Astrocyte of the cerebellum (primary cell): ENCODE measurements at regions of chr7 and their contacts with region 1.

Region 1: DNA sequence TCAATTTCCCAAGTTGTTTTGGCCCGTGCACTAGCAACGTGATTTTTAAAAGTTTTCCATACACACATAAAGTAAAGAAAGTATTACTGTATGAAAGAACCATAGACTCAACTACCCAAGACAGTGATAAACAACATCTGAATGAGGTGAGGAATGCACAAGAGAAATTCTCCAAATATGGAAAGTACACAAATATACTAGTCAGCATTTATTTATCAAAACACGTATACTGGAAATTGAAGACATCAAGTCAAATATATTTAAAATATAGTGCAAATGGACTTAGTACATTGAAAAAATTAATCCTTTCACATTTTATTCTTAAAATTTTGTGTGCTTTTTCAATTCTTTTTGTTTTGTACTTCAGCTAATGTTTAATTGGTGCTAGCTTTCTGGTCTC is 143.6 kb downstream of the ARL4A start:
- DNase-seq: no peak
- H3K4me3 ChIP-seq: no peak overlapping the region
- CTCF ChIP-seq: no peak

Region 2: DNA sequence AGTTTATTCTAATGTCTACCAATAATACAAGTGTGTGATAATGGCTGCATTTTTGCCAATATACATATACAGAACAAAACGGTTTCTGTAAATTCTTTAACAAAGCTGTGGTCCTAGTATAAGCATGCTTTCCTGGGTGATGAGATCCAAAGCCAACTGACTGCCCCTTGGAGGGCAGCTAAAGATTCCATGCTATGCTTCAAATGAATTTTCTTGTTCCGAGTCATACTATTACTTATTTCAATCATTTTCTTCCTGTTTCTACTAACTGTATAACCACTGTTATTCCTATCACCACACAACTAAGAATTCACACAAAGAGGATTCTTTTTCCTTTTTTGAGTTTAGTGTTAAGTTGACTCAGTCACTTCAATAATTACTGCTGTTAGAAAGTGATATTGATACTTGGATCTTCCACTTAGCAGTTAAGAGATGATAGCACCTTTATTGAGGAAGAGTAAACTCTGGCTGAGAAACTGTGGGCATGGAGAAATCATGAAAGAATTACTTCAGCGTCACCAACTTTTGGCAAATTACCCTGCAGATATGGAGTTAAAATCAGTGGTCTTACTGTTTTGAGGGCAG is 53.9 kb after region 1 on chr7:
- in situ Hi-C with region 1: loop called (anchors 5 kb)
- DNase-seq: no peak
- H3K4me3 ChIP-seq: no peak overlapping the region
- CTCF ChIP-seq: no peak

Region 3: DNA sequence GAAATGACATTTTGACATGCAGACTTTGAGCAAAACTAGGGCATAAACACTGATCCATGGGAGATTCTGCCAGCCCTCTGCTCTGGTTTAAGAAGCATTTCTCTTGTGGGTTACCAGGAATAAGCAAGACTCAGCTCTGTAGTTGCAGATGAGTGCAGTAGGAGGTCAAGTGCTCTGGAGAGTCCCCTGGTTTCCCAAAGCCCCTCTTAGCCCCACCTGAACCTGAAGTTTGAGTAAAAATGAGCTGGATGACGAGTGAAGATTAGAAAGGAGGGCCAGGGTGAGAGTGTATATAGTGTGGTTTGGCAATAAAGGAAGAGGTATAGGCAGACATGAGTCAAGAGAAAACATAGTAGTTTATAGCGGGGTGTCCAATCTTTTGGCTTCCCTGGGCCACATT is 76.8 kb after region 1 on chr7:
- in situ Hi-C with region 1: no loop called
- DNase-seq: no peak
- H3K4me3 ChIP-seq: no peak overlapping the region
- CTCF ChIP-seq: no peak